Heart right ventricle (tissue), 16 donors: ENCODE measurements at regions of chr18 and their contacts with region 1.

Region 1: DNA sequence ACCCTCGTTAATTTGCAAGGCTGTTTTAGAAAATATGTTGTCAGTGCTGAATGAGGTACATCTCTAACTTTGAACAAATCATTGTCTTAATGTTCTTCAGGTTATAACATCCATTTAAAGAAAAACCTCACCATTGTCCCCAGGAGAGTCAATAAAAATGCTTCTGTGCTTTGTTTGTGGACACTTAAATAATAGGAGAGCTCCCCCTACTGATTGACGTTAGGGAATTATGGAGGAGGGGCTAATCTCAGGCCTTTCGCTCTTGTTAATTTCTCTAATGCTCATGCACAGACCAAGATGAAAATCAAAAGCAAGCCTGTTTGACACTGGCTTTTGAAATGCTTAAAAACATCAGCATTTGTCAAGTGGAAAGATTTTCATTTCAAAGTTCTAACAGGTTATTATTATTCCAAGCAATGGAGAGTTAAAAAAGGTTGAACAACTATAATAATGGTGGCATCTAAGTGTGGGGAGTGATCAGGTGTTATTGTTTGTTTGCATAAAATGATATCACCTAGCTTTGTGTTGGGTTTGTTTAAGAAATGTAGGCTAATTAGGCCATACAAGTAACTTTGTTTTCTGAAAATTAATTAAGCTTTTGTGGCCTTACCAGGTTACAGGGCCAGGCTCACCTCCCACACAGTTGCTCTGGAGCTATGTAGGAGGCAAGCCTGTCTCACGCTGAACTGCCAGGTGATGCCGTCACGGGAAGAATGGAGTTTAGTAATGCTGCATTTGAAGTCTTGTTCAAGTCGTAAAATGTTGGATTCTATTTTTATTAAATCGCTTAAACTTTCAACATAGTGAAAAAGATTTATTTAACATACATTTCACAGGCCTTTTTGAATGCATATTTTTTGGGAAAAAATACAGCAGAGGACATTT is 51.7 kb upstream of the SMIM21 start:
- DNase-seq: no peak
- ATAC-seq: peak in 7 of 8 donors; percentile 68 to 85 (median 71)
- H3K4me3 ChIP-seq: no peak overlapping the region
- H3K27ac ChIP-seq: no peak overlapping the region
- H3K4me1 ChIP-seq: no peaks in the 10 kb centered on the region
- H3K27me3 ChIP-seq: no peaks in the 10 kb centered on the region
- CTCF ChIP-seq: peak; percentile 29 to 90 (median 72)

Region 2: GRCh38 chr18:74661691-74662090 is 817.5 kb before region 1 on chr18:
- intact Hi-C with region 1: loop called in 5 of 10 experiments (anchors 5 to 10 kb)
- DNase-seq: no peak
- ATAC-seq: no peak
- H3K4me3 ChIP-seq: no peak overlapping the region
- H3K27ac ChIP-seq: no peak overlapping the region
- H3K4me1 ChIP-seq: peaks cover 0 to 6% (median 0%) of the 10 kb centered on the region in 9 donors
- H3K27me3 ChIP-seq: no peaks in the 10 kb centered on the region
- CTCF ChIP-seq: no peak

Region 3: GRCh38 chr18:74896390-74896991 is 582.7 kb before region 1 on chr18:
- intact Hi-C with region 1: loop called in 2 of 10 experiments (anchors 10 kb)
- DNase-seq: peak in 1 of 2 donors; percentile 12
- ATAC-seq: peak in 6 of 8 donors; percentile 58 to 86 (median 78)
- H3K4me3 ChIP-seq: no peak overlapping the region
- H3K27ac ChIP-seq: no peak overlapping the region
- H3K4me1 ChIP-seq: peaks cover 0 to 26% (median 0%) of the 10 kb centered on the region in 9 donors
- H3K27me3 ChIP-seq: no peaks in the 10 kb centered on the region
- CTCF ChIP-seq: peak in 8 of 9 donors; percentile 26 to 66 (median 58)

Region 4: GRCh38 chr18:75161256-75162028 is 317.8 kb before region 1 on chr18:
- intact Hi-C with region 1: loop called in 4 of 10 experiments (anchors 5 to 10 kb)
- DNase-seq: peak in 1 of 2 donors; percentile 28
- ATAC-seq: peak; percentile 32 to 86 (median 72)
- H3K4me3 ChIP-seq: peak overlapping the region in 9 of 10 donors; percentile 24 to 62 (median 49)
- H3K27ac ChIP-seq: peak overlapping the region in 6 of 10 donors; percentile 20 to 50 (median 40)
- H3K4me1 ChIP-seq: peaks cover 0 to 16% (median 5%) of the 10 kb centered on the region in 9 donors
- H3K27me3 ChIP-seq: no peaks in the 10 kb centered on the region
- CTCF ChIP-seq: peak in 5 of 9 donors; percentile 4 to 30 (median 11)

Region 5: GRCh38 chr18:75167759-75168618 is 311.2 kb before region 1 on chr18:
- intact Hi-C with region 1: loop called in 4 of 10 experiments (anchors 5 to 10 kb)
- DNase-seq: peak in 1 of 2 donors; percentile 61
- ATAC-seq: peak in 6 of 8 donors; percentile 18 to 64 (median 37)
- H3K4me3 ChIP-seq: peak overlapping the region in 9 of 10 donors; percentile 2 to 41 (median 34)
- H3K27ac ChIP-seq: peak overlapping the region; percentile 13 to 93 (median 56)
- H3K4me1 ChIP-seq: peaks cover 5 to 51% (median 17%) of the 10 kb centered on the region in 9 donors
- H3K27me3 ChIP-seq: no peaks in the 10 kb centered on the region
- CTCF ChIP-seq: no peak

Region 6: DNA sequence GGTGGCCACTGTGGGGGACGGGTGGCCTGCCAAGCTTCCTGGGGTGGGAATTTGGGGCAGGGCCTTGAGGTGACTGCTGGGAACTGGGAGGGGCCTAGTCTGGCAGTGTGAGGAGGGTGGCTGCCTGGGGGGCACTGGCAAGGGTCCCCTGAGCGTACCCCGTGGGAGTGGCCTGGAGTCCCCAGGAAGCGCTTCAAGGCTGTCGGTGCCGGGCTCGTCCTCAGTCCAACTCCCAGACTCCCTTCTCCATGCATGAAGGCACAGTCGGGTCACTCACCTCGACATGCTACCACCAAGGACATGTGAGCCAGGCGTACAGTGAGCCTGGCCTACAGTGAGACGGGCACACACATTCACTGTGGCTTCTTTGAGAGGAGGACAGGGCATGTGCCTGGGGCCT is 157.0 kb before region 1 on chr18:
- intact Hi-C with region 1: no loop called
- DNase-seq: no peak
- ATAC-seq: no peak
- H3K4me3 ChIP-seq: no peak overlapping the region
- H3K27ac ChIP-seq: no peak overlapping the region
- H3K4me1 ChIP-seq: no peaks in the 10 kb centered on the region
- H3K27me3 ChIP-seq: no peaks in the 10 kb centered on the region
- CTCF ChIP-seq: no peak

Region 7: GRCh38 chr18:75393721-75394120 is 85.5 kb before region 1 on chr18:
- intact Hi-C with region 1: no loop called
- DNase-seq: no peak
- ATAC-seq: no peak
- H3K4me3 ChIP-seq: no peak overlapping the region
- H3K27ac ChIP-seq: no peak overlapping the region
- H3K4me1 ChIP-seq: peaks cover 0 to 17% (median 0%) of the 10 kb centered on the region in 9 donors
- H3K27me3 ChIP-seq: peaks cover 0 to 6% (median 0%) of the 10 kb centered on the region in 7 donors
- CTCF ChIP-seq: no peak

Region 8: DNA sequence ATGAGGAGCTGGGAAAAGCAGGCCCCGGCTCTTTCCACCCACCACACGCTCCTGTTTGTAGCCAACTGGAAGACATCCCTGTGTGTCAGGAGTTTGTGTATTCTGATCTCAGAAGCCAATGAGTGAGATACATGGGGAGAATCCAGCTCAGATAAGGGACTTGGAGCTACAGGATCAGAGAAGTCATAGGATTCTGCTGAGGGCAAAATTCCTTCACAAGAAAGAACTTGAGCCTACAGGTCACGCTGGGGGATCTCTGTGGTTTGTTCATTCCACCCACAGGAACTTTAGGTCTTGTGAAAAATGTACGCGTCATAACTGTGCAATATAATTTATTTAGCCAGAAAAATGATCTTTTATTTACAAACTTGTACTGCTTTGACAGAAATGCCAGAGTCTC is 28.4 kb after region 1 on chr18:
- intact Hi-C with region 1: no loop called
- DNase-seq: no peak
- ATAC-seq: no peak
- H3K4me3 ChIP-seq: no peak overlapping the region
- H3K27ac ChIP-seq: no peak overlapping the region
- H3K4me1 ChIP-seq: no peaks in the 10 kb centered on the region
- H3K27me3 ChIP-seq: peaks cover 0 to 12% (median 0%) of the 10 kb centered on the region in 7 donors
- CTCF ChIP-seq: no peak

Region 9: GRCh38 chr18:76772665-76773064 is 1293.4 kb after region 1 on chr18:
- intact Hi-C with region 1: no loop called
- DNase-seq: no peak
- ATAC-seq: no peak
- H3K4me3 ChIP-seq: no peak overlapping the region
- H3K27ac ChIP-seq: no peak overlapping the region
- H3K4me1 ChIP-seq: no peaks in the 10 kb centered on the region
- H3K27me3 ChIP-seq: peaks cover 0 to 21% (median under 1%) of the 10 kb centered on the region in 7 donors
- CTCF ChIP-seq: no peak